Calu3 (cell line): ENCODE measurements at regions of chr7 and their contacts with region 1.

Region 1: GRCh38 chr7:155412537-155413253 is 45.2 kb upstream of the EN2 start:
- DNase-seq: peak; percentile 77
- H3K4me3 Mint-ChIP-seq: no peak overlapping the region
- H3K27ac Mint-ChIP-seq: no peak overlapping the region
- H3K4me1 Mint-ChIP-seq: no peaks in the 10 kb centered on the region
- H3K27me3 Mint-ChIP-seq: peaks cover 74% of the 10 kb centered on the region
- CTCF ChIP-seq: peak; percentile 86

Region 2: DNA sequence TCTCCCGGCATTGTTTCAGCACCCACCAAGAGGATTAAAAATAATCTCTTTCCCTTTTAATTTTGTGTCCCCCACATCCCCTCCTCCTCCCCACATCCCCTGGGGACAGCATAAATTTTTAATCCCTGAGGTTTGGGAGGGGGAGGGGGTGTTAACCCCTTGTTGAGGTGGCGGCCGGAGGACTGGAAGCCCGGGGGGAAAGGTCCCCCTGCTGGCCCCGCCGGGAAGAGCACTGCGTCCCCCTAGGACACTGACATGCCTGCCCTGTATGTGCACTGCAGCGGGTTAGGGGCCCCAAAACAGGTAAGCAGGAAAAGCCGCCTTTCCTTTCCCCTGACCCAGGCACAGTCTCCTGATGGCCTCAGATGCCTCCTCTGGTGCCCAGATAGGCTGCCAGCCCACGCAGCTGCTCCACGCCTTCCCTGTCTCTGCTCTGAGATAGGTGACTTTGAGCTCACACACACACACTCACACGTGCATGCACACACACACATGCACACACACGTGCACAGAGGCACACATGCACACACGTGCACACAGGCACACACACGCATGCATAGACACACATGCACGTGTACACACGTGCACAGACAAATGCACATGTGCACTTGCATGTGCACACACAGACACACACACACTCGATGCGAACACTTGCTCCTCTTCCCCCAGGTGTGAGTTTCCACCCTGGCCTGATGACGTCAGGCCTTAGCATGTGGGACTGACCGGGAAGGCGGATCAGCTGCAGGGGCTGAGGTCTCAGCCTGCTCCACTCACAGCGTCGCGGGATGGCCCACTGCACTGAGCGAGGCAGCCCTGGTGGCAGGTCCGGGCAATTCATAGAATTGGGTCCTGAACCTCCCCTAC is 121.4 kb after region 1 on chr7:
- CTCF ChIA-PET with region 1: no interaction called
- intact Hi-C with region 1: loop called (anchors 5 kb)
- DNase-seq: peak; percentile 54
- H3K4me3 Mint-ChIP-seq: peak overlapping the region; percentile 48
- H3K27ac Mint-ChIP-seq: no peak overlapping the region
- H3K4me1 Mint-ChIP-seq: peaks cover 13% of the 10 kb centered on the region
- H3K27me3 Mint-ChIP-seq: peaks cover 95% of the 10 kb centered on the region
- CTCF ChIP-seq: peak; percentile 80

Region 3: DNA sequence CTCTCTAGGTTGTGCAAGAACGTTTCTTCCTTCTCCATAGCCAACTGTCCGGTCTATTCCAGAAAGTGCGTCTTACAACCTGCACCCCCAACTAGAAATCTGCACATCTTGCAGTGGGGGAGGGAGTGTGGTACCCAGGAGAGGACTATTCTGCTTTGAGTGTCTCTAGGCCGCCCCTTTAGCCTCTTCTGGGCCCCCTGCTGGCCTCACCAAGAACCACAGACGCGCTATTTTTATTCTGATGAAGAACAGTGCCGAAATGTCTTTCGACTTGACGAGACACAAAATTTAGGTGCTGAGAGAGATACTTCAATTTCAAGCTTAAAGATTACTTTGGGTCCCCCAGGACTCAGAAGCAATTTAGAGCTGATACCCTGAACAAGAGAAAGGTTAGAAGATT is 132.7 kb after region 1 on chr7:
- CTCF ChIA-PET with region 1: no interaction called
- intact Hi-C with region 1: no loop called
- DNase-seq: no peak
- H3K4me3 Mint-ChIP-seq: no peak overlapping the region
- H3K27ac Mint-ChIP-seq: no peak overlapping the region
- H3K4me1 Mint-ChIP-seq: no peaks in the 10 kb centered on the region
- H3K27me3 Mint-ChIP-seq: peaks cover 58% of the 10 kb centered on the region
- CTCF ChIP-seq: no peak

Region 4: DNA sequence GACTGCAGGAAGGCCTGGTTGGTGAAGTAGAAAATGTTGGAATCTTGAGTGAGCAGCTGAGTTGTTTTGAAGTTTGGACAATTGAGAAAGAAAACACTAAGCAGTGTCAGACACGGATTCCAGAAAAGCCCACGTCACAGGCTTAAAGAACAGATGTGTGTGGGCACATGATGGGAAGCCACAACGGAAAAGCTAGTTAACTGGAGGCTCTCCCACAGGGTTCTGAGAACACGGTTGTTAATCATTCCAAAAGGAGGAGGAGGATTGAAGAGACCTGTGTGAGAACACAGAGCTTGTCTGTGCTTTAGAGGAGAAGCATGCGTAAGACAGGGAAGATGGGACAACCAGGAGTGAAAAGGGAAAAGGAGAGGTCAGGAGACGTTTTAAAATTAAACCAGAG is 357.0 kb after region 1 on chr7:
- CTCF ChIA-PET with region 1: no interaction called
- intact Hi-C with region 1: loop called (anchors 5 kb)
- DNase-seq: no peak
- H3K4me3 Mint-ChIP-seq: no peak overlapping the region
- H3K27ac Mint-ChIP-seq: no peak overlapping the region
- H3K4me1 Mint-ChIP-seq: no peaks in the 10 kb centered on the region
- H3K27me3 Mint-ChIP-seq: no peaks in the 10 kb centered on the region
- CTCF ChIP-seq: no peak